ENCODE measurements at regions of chr2 and their contacts with region 1.

Region 1: GRCh38 chr2:179218848-179219594 is 45.6 kb downstream of the SESTD1 start:
- DNase-seq: peak; percentile 67
- ATAC-seq: peak; percentile 91
- H3K4me3 ChIP-seq: no peak overlapping the region
- H3K27ac ChIP-seq: no peak overlapping the region
- H3K4me1 ChIP-seq: peaks cover 0 to 3% of the 10 kb centered on the region in 2 experiments; a peak in 1 of 4 replicates
- H3K27me3 ChIP-seq: no peaks in the 10 kb centered on the region
- CTCF ChIP-seq: peak; percentile 77 to 91 (median 90)
- POLR2A ChIP-seq: no peak
- RAD21 ChIP-seq: peak; percentile 91

Region 2: GRCh38 chr2:179340668-179341067 is 121.6 kb after region 1 on chr2:
- CTCF ChIA-PET with region 1: interaction called, 4 read pairs
- POLR2A ChIA-PET with region 1: no interaction called
- RAD21 ChIA-PET with region 1: no interaction called
- intact Hi-C with region 1: loop called (anchors 1 kb)
- DNase-seq: peak; percentile 19
- ATAC-seq: peak; percentile 63
- H3K4me3 ChIP-seq: no peak overlapping the region
- H3K27ac ChIP-seq: no peak overlapping the region
- H3K4me1 ChIP-seq: peaks cover 7 to 11% of the 10 kb centered on the region in 2 experiments; a peak in 2 of 4 replicates
- H3K27me3 ChIP-seq: no peaks in the 10 kb centered on the region
- CTCF ChIP-seq: peak; percentile 34 to 53 (median 52); a peak in 4 of 6 replicates
- POLR2A ChIP-seq: no peak
- RAD21 ChIP-seq: peak; percentile 74

Region 3: DNA sequence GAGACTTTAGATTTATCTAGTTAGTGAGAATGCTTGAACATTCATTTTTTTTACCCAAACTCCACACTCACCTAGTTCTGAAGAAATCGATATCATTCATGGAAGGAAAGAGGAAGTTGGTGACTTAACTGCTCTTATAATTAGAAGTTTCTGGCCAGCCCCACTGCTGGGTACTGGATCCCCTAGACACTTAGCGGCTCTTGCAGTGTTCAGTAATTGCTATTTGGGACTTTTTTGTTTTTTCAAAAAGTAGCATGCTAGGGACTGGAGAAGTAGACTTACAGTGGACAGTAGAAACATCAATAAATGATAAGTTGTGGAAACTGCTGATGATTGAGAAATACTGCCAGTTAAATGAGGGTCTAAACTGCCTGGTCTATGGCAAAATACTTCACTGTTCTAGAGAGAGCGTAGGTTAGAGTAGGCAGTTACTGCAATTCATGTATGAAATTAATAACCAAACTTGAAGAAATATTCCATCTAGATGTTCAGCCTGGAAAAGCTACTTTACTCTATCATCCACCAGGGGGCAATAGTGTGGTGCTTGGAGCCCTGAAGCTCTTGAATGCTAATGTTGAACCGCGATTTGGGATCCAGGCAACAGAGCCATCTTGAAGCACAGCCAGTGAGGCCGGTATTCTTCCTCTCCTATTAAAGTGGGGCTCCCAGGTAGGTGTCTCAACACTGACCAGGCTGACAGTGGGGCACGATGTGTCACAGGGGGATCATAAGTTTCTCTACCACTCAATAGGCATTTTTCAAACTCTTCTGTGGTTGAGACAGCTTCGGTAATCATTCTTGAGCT is 191.7 kb after region 1 on chr2:
- CTCF ChIA-PET with region 1: interaction called, 4 read pairs
- POLR2A ChIA-PET with region 1: no interaction called
- RAD21 ChIA-PET with region 1: no interaction called
- intact Hi-C with region 1: loop called (anchors 10 kb)
- DNase-seq: peak; percentile 60
- ATAC-seq: peak; percentile 96
- H3K4me3 ChIP-seq: no peak overlapping the region
- H3K27ac ChIP-seq: no peak overlapping the region
- H3K4me1 ChIP-seq: 0 out of 4 replicates have a peak, but pooled peaks cover 0 to 3% of the 10 kb centered on the region in 2 experiments
- H3K27me3 ChIP-seq: no peaks in the 10 kb centered on the region
- CTCF ChIP-seq: peak; percentile 65 to 84 (median 80); a peak in 5 of 6 replicates
- POLR2A ChIP-seq: no peak
- RAD21 ChIP-seq: peak; percentile 72

Region 4: GRCh38 chr2:179440642-179441251 is 221.7 kb after region 1 on chr2:
- CTCF ChIA-PET with region 1: interaction called, 3 read pairs
- POLR2A ChIA-PET with region 1: no interaction called
- RAD21 ChIA-PET with region 1: no interaction called
- intact Hi-C with region 1: loop called (anchors 2 kb)
- DNase-seq: peak; percentile 34
- ATAC-seq: peak; percentile 70
- H3K4me3 ChIP-seq: no peak overlapping the region
- H3K27ac ChIP-seq: no peak overlapping the region
- H3K4me1 ChIP-seq: no peaks in the 10 kb centered on the region
- H3K27me3 ChIP-seq: no peaks in the 10 kb centered on the region
- CTCF ChIP-seq: peak; percentile 53 to 77 (median 56); a peak in 5 of 6 replicates
- POLR2A ChIP-seq: no peak
- RAD21 ChIP-seq: peak; percentile 63

Region 5: DNA sequence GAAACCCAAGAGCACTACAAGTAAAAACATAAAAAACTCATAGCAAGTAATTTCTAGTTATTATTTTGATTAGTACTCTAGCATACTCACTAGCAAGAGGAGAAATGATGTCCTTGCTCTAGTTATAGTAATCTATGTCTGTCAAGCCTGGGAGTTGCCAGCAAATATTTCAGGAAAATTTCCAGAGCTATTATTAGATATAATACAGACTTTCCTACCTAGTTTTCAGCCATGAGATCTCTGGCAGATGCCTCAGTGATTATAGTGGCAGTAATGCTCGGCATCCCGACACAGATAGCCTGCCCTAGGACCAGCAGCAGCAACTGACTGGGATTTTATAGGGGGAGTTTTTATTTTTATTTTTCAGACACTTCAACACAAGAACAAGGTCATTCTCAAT is 418.0 kb after region 1 on chr2:
- CTCF ChIA-PET with region 1: no interaction called
- POLR2A ChIA-PET with region 1: no interaction called
- RAD21 ChIA-PET with region 1: no interaction called
- intact Hi-C with region 1: no loop called
- DNase-seq: no peak
- ATAC-seq: no peak
- H3K4me3 ChIP-seq: no peak overlapping the region
- H3K27ac ChIP-seq: no peak overlapping the region
- H3K4me1 ChIP-seq: no peaks in the 10 kb centered on the region
- H3K27me3 ChIP-seq: no peaks in the 10 kb centered on the region
- CTCF ChIP-seq: no peak
- POLR2A ChIP-seq: no peak
- RAD21 ChIP-seq: no peak

Measured in HCT116 (cell line).